Posterior cingulate gyrus (tissue), 11 donors: ENCODE measurements at regions of chr5 and their contacts with region 1.

Region 1: DNA sequence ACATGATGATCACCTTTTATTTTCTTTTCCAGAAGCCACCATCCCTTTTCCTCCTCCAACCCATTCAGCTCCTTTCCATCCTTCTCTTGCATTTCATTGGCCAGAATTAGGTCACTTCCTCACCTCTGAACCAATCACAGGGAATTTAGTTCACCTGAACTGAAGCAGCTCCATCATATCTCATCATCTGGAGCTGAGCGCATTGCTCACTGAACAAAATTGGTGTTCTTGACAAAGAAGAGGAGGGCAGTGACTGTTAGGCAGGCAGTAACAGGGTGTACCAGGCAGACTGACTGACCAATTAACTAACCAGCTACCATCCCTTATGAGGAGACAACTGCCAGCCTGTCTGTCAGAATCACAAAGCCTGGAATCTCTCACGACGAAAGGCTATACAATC is 1.8 kb upstream of the ZNF354A start:
- DNase-seq: no peak

Region 2: GRCh38 chr5:178404987-178405386 is 327.3 kb before region 1 on chr5:
- intact Hi-C with region 1: no loop called
- DNase-seq: peak in 2 of 10 donors; percentile 48 to 67

Region 3: DNA sequence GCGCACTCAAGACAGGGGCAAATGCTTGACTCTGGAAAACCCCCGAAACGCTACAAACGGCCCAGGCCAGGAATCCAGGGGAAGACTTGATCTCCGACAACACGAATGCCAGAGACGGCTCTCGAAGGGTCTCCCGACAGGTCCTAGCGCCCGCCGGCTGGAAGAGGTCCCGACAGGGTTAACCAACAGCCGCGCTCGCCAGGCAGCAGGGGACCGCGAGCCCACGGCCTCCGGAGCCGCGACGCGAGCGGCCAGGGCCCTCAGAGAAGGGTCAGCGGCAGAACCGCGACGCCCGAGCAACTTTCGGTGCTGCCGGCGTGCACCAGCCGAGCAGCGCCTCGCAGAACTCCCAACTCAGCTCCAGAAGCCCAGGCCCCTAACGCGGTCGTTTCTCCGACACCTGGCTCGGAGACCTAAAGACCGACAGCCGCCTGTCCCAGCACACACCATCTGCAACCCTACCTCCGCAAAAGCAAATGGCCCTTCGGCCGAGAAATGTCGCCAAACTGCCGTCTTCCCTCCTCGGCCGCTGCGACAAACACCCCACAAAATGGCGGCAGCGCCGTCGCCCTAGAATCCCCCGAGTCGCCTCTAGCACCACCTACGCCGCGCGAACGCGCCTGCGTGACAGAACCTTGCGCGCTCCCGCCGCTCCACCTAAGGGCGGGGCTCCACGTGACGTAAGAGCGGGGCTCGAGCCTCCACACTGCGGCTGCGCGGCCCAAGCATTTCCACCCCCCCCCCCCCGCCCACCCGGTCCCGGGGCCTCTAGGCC is 105.6 kb before region 1 on chr5 and contains the start of gene CLK4:
- intact Hi-C with region 1: loop called (anchors 10 kb)
- DNase-seq: peak; percentile 91 to 99 (median 95)

Region 4: DNA sequence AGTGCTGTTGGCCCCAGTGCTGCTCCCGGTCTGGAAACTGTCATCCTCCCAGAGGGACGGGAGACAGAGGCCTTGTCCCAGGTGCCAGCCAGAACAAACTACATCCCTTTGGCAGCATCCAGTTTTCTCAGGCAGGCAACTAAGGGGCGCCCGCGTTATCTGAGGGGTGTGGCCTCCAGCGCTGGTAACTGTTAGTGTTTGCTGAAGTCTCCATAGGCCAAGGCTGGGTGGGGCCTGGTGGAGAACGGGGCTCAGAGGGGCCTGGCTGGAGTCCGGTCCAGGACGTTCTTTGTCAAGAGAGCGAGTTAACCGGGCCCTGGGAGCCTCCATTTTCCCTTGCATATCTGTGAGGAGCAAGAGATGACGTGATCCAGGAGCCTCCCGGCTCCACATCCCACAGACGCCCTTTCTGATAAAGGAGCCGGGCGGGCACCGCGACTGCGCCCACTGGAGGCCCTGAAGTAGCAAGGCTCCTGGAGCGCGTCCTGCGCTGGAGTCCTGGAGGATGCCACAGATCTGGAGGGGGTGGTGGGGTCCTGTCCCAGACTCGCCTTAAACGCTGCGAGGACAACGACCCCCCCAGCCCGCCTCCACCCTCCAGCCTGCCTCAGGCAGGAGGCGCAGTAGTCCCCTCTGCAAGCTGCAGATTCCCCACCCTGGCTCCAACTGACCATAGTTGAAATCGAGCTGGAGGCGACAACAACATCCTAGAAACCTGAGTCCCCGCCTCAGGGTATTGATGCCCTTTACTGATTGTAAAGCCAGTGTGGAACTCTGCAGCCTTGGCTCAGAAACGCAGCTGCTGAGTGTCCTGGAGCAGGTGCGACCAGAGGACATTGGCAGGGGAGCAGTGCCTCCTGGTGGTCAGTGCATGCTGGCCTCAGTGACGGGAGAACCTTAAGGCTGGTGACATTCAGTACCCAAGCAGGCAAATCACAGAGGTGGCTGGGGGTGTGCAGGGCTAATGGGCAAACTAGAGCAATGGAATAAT is 106.7 kb after region 1 on chr5:
- intact Hi-C with region 1: loop called (anchors 5 kb)
- DNase-seq: peak; percentile 17 to 95 (median 69)

Region 5: GRCh38 chr5:178859625-178860531 is 127.6 kb after region 1 on chr5 and contains the start of gene ZNF354B:
- intact Hi-C with region 1: loop called (anchors 1 kb)
- DNase-seq: peak; percentile 84 to 99 (median 90)

Region 6: GRCh38 chr5:178940569-178941360 is 208.5 kb after region 1 on chr5 and contains the start of gene ZNF454:
- intact Hi-C with region 1: loop called (anchors 5 kb)
- DNase-seq: peak; percentile 93 to 99 (median 96)

Region 7: GRCh38 chr5:179060116-179061008 is 328.1 kb after region 1 on chr5 and contains the start of gene ZNF354C:
- intact Hi-C with region 1: loop called (anchors 2 kb)
- DNase-seq: peak; percentile 78 to 98 (median 87)

Region 8: DNA sequence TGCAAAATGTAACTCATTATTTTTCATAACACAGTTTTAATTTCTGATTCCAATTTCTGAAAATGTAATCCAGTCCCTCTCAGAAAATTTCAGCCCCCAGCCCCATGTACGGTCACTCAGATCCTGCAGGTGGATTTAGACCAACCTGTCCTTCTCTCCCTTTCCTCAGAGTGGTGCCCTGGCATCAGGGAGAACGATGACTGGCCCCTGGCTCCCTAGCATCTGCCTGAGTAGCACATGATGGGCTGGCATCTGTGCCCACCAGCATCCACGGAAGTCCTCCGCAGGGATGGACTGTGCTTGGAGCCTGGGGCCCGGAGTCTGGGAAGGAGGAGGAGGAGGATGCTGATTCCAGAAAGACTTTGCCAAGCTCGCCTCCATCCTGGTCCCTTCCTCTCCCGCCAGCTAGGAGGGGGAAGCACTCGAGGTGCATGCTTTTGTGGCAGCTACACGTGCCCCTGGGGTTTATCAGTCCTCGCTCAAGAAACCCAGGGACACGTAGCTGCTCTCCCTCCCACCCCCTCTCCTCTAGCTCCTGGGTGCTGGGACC is 763.7 kb after region 1 on chr5:
- intact Hi-C with region 1: loop called (anchors 5 kb)
- DNase-seq: peak in 5 of 10 donors; percentile 10 to 86 (median 34)

Region 9: DNA sequence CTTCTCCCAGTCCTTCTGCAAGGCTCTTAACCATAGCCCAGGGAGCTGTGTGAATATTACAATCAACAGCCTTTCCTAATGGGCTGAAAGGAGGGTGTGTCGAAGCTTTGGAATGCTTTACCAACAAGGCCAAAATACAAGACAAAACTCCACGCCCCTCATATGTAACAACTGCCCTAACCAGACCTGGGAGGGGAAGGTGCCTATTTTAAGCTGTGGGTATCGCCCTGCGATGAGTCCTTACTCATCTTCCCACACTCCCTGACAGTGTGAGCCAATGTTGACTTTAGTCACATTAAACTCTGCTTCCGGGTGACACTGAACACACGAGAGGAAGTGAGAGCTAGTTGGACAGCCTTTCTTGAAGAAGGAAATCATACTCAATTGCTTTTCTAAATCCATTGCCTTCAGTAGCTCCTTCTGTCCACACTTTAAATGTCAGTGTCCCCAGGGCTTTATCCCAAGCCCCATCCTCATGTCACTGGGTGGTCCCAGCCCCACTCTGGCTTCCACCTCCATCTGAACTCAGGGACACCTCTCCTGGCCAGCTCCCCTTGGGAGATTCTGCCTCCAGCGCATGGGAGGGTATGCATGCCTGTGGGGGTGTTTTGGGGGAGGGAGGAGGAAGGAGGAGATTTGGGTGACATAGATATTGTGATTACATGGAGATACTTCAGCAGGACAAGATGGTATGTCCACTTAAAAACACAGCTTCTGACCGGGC is 1181.9 kb after region 1 on chr5:
- intact Hi-C with region 1: no loop called
- DNase-seq: peak in 1 of 10 donors; percentile 41